Activated CD8-positive, alpha-beta memory T cell treated with anti-CD3 and anti-CD28 coated beads, Interleukin-2, amount 10 ng/mL, durations not matched to agents 7 days and 5 days (primary cell): ENCODE measurements at regions of chr22 and their contacts with region 1.

Region 1: DNA sequence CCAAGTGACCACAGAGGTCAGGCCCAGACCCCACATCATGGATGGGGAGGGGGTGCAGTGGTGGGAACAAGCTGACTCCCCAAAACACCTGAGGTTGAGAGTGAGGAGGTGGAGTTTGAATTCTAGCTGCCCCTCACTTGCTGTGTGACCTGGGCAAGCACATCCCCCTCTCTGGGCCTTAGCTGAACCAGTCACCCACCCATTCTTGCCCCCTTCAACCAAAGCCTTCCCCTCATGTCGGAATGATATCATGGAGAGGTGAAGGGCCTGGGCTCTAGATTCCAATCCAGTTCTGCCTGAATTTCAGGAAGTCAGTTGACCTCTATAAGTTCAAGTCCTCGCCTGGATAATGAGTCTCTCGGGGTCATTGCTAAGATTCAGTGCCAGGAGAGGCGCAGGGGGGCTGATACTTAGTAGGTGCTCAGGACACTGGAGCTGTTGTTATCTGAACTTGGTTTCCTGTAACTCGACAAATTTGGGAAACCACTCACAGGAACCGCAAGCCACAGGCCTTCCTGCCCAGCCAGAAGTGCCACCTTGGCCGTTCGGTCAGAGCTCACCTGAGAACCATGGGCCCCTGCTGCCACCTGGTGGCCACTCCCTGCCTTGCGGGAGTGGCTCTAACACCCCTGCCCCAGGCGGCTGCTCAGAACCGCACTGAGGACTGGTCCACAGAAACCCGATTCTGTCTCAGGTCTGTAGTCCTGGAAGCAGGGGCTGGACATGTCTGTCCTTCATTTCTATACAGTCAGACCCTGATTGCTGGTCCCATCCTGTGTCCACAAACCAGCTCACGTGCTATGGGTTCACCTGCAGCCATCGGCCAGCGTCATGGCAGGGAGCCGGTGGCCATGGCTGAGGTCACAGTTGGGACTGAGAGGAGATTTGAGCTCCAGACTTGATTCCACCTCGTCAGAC is 6.9 kb downstream of the CDC42EP1 start:
- DNase-seq: peak; percentile 98
- ATAC-seq: peak; percentile 90
- H3K4me3 Mint-ChIP-seq: peak overlapping the region; percentile 45
- H3K27ac Mint-ChIP-seq: peak overlapping the region; percentile 86
- H3K4me1 Mint-ChIP-seq: peaks cover 28% of the 10 kb centered on the region
- H3K27me3 Mint-ChIP-seq: peaks cover 38% of the 10 kb centered on the region

Region 2: GRCh38 chr22:37316875-37317371 is 250.2 kb before region 1 on chr22:
- CTCF ChIA-PET with region 1: interaction called, 14 read pairs
- DNase-seq: peak; percentile 85
- ATAC-seq: peak; percentile 83
- H3K4me3 Mint-ChIP-seq: no peak overlapping the region
- H3K27ac Mint-ChIP-seq: no peak overlapping the region
- H3K4me1 Mint-ChIP-seq: peaks cover 42% of the 10 kb centered on the region
- H3K27me3 Mint-ChIP-seq: peaks cover 11% of the 10 kb centered on the region

Region 3: GRCh38 chr22:37472418-37473006 is 94.7 kb before region 1 on chr22:
- CTCF ChIA-PET with region 1: interaction called, 39 read pairs
- DNase-seq: peak; percentile 57
- ATAC-seq: peak; percentile 52
- H3K4me3 Mint-ChIP-seq: no peak overlapping the region
- H3K27ac Mint-ChIP-seq: peak overlapping the region; percentile 52
- H3K4me1 Mint-ChIP-seq: no peaks in the 10 kb centered on the region
- H3K27me3 Mint-ChIP-seq: no peaks in the 10 kb centered on the region

Region 4: GRCh38 chr22:37538590-37539357 is 28.4 kb before region 1 on chr22:
- CTCF ChIA-PET with region 1: interaction called, 661 read pairs
- DNase-seq: peak; percentile 95
- ATAC-seq: peak; percentile 98
- H3K4me3 Mint-ChIP-seq: no peak overlapping the region
- H3K27ac Mint-ChIP-seq: peak overlapping the region; percentile 52
- H3K4me1 Mint-ChIP-seq: peaks cover 51% of the 10 kb centered on the region
- H3K27me3 Mint-ChIP-seq: peaks cover 19% of the 10 kb centered on the region

Region 5: GRCh38 chr22:37588546-37589215 is 21.5 kb after region 1 on chr22:
- CTCF ChIA-PET with region 1: interaction called, 62 read pairs
- DNase-seq: no peak
- ATAC-seq: no peak
- H3K4me3 Mint-ChIP-seq: no peak overlapping the region
- H3K27ac Mint-ChIP-seq: no peak overlapping the region
- H3K4me1 Mint-ChIP-seq: peaks cover 15% of the 10 kb centered on the region
- H3K27me3 Mint-ChIP-seq: peaks cover 20% of the 10 kb centered on the region

Region 6: DNA sequence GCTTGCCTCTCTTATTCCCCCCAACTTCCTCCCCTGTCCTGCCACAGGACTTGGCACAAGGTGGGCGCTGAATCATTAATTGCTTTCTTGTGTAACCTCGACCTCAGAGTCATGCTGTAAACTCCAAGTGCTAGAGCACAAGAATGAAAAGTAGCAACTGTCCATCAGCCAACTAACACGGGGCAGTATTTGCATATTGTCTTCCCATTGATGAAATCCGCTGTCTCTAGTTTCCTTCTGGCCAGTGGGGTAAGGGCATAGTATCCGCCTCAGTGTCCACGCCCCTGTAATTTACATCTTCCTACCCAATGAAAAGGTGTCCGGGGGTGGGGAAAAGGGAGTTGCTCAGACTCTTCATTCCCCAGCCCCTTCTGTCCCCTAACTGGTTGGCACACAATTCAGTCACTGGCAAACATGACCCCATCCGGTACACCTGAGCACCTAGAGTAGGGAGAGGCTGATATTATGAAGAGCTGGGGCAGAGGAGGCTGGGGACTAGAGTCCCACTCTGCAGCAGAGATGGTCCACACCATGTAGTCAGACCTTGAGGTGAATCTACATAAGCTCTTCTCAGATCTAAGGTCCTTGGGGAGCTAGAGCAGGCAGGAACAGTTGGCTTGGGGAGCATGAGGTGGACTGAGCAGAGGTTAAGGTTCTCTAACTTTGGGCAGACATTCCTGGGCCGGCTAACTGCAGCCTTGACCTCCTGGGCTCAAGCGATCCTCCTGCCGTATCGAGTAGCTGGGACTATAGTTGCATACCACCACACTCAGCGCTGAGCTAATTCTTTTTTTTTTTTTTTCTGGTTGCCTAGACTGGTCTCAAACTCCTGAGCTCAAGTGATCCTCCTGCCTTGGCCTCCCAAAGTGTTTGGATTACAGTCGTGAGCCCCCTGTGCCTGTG is 34.6 kb after region 1 on chr22:
- CTCF ChIA-PET with region 1: interaction called, 41 read pairs
- DNase-seq: no peak
- ATAC-seq: no peak
- H3K4me3 Mint-ChIP-seq: no peak overlapping the region
- H3K27ac Mint-ChIP-seq: no peak overlapping the region
- H3K4me1 Mint-ChIP-seq: peaks cover 23% of the 10 kb centered on the region
- H3K27me3 Mint-ChIP-seq: peaks cover 15% of the 10 kb centered on the region